ENCODE measurements at regions of chr11 and their contacts with region 1.

Region 1: DNA sequence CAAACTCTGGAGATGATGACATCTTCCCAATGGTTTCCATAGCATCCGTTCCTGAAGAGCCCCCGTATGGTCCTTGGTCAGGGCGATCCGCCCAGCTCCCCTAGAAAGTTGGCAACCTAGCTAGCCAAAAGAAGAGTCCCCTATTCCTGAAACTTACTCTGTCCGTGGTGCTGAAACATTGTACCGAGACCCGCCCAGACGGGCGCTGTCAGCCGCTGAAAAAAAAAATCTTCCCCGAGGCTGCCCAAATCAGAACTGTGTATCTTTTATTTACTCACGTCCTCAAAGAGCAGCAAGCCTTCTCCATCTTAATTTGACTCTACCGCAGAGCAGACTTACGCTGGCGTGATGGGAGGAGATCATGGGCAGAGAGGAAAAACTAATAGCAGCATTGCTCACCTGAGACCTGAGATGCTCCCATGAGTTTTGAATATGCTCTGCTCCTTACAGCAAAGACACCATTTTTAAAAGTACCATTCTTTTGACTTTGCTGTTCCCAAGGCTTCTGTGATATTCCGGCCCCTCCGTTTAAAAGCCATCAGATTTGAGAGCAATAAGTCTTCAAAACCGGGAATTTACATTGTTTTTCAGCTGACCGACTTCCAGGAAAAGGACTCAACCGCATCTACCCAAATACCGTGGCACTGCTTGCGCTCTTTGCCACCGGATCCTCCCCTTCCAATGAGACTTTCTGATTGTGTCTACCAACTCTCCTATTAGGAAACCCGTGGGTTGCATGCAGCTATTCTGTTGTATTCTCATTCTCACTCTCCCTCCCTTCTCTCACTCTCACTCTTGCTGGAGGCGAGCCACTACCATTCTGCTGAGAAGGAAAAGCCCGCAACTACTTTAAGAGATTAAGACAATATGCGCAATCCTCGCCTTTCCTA is at the start of gene SLC17A6:
- DNase-seq: peak; percentile 25
- H3K4me3 Mint-ChIP-seq: no peak within 1 kb of the TSS
- H3K27ac Mint-ChIP-seq: no peak within 1 kb of the TSS
- H3K4me1 Mint-ChIP-seq: peaks cover 22% of the 10 kb centered on the region
- H3K27me3 Mint-ChIP-seq: peaks cover 59% of the 10 kb centered on the region
- total RNA-seq, gene SLC17A6: not detected

Region 2: DNA sequence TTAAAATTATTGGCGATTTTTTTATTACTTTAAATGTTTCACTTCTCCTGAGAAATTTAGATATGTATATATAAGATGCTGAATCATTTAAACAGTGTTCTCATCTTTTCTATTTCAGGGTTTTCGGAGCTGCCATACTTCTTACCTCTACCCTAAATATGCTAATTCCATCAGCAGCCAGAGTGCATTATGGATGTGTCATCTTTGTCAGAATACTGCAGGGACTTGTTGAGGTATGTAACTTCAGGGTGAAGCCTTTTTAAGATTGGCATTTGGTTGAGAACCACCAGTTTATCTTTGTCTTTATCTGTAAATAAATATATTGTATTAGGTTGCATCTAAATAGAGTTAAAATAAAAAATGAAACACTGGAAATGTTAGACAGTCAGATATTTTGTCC is 21.5 kb after region 1 on chr11:
- CTCF ChIA-PET with region 1: no interaction called
- intact Hi-C with region 1: no loop called
- DNase-seq: no peak
- H3K4me3 Mint-ChIP-seq: no peak overlapping the region
- H3K27ac Mint-ChIP-seq: no peak overlapping the region
- H3K4me1 Mint-ChIP-seq: no peaks in the 10 kb centered on the region
- H3K27me3 Mint-ChIP-seq: peaks cover 8% of the 10 kb centered on the region

Region 3: DNA sequence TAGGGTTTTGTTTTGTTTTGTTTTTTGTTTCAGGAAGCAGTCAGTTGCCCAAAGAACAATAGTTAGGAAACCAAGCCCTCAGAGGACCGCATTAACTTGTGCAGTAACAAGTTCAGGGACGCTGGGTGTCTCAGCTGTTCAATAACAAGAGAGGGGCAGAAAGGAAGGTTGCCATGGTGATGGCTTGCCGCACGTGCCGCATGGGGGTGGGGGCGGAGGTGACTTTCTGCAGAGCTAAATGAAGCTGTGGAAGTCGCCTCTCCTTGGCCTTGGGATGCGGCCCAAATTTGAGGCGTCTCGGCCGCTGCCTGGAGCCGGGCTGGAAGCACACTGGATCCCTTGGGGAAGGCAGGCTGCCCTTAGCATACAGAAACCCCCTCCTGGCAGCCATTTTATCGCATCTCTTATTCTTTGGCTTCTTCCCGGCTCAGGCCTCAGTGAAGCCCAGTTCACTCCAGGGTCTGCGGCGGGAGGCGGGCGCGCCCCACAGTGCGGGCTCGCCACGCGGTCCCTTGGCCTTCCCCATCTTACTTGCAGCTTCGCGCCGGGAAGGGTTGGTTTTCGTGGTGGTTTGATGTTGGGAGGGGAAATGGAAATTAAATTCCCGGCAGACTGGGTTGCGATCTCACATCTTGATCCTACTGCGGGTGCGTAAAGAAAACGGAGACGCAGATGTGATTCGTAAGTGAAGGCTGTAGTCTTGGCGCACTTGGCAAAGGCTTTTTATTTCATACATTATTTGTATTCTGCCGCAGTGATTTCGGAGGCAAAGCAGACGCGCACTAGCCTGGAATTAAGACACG is 94.7 kb after region 1 on chr11:
- CTCF ChIA-PET with region 1: no interaction called
- intact Hi-C with region 1: loop called (anchors 5 kb)
- DNase-seq: peak; percentile 39
- H3K4me3 Mint-ChIP-seq: peak overlapping the region; percentile 56
- H3K27ac Mint-ChIP-seq: no peak overlapping the region
- H3K4me1 Mint-ChIP-seq: peaks cover 17% of the 10 kb centered on the region
- H3K27me3 Mint-ChIP-seq: peaks cover 40% of the 10 kb centered on the region

Region 4: GRCh38 chr11:22539821-22540256 is 202.0 kb after region 1 on chr11:
- CTCF ChIA-PET with region 1: interaction called, 4 read pairs
- intact Hi-C with region 1: loop called (anchors 1 kb)
- DNase-seq: no peak
- H3K4me3 Mint-ChIP-seq: no peak overlapping the region
- H3K27ac Mint-ChIP-seq: no peak overlapping the region
- H3K4me1 Mint-ChIP-seq: no peaks in the 10 kb centered on the region
- H3K27me3 Mint-ChIP-seq: peaks cover 20% of the 10 kb centered on the region

Region 5: GRCh38 chr11:22670830-22671229 is 333.0 kb after region 1 on chr11:
- CTCF ChIA-PET with region 1: no interaction called
- intact Hi-C with region 1: loop called (anchors 1 kb)
- DNase-seq: no peak
- H3K4me3 Mint-ChIP-seq: no peak overlapping the region
- H3K27ac Mint-ChIP-seq: no peak overlapping the region
- H3K4me1 Mint-ChIP-seq: peaks cover 17% of the 10 kb centered on the region
- H3K27me3 Mint-ChIP-seq: peaks cover 47% of the 10 kb centered on the region

Region 6: DNA sequence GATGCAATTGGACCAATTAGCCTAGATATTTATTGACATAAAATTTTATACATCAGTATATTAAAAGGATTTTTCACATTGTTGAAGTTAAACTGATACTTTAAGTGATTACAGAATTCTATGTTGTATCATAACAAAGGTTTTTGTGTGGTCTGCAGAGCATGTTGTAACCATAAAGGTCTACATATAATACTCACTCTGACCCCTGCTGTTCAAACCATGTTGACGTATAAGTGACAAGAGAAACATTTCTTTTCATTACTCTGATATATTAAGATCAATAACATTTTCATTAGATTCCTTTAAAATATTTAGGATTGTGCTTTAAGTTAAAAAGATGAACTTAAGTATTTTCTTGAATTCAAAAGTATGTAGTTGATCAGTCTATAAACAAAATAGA is 392.5 kb after region 1 on chr11:
- CTCF ChIA-PET with region 1: no interaction called
- intact Hi-C with region 1: loop called (anchors 1 kb)
- DNase-seq: peak; percentile 11
- H3K4me3 Mint-ChIP-seq: no peak overlapping the region
- H3K27ac Mint-ChIP-seq: no peak overlapping the region
- H3K4me1 Mint-ChIP-seq: no peaks in the 10 kb centered on the region
- H3K27me3 Mint-ChIP-seq: no peaks in the 10 kb centered on the region